SK-N-SH (cell line): ENCODE measurements at regions of chr16 and their contacts with region 1.

Region 1: DNA sequence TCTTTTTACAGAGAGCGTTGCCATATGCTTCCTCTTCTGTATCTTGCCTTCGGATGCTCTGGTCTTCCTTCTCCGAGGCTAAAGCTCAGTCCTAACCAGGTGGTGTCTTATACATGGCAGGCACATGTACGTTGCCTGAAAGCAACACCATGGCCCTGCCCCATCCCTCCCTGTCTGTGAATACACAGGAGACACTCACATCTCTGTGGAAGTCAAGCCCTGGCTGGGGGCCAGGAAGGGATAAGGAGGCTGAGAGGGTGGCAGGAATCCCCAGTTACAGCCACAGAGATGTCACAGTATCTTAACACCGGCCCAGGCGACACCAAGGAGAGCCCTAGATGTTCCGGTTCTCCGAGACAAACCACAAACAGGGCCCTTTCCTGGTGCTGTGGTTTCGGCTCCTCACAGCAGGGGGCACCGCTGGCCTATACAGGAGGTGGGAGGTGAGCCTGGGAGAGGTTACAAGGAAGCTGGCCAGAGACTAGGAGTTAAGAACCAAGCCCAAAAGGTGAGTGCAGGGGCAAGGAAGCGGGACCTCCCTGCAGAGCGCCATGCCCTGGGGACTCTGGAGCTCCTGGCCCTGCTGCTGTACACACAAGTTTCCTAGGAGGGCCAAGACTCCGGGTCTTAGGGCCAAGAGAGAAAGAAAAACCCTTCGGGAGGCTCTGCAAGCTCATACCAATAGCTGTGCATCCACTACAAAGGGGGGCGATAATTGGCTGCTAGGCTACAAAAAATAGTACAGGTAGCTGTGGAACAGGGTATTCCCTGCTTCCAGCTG is 41.7 kb downstream of the SRL start:
- DNase-seq: peak; percentile 86
- H3K4me3 ChIP-seq: no peak overlapping the region
- H3K27ac ChIP-seq: no peak overlapping the region
- H3K4me1 ChIP-seq: peaks cover 2 to 4% of the 10 kb centered on the region in 2 experiments; a peak in 1 of 4 replicates
- H3K27me3 ChIP-seq: no peaks in the 10 kb centered on the region
- CTCF ChIP-seq: peak; percentile 82
- EP300 ChIP-seq: no peak
- RAD21 ChIP-seq: peak; percentile 90

Region 2: GRCh38 chr16:3983081-3983520 is 217.1 kb before region 1 on chr16:
- CTCF ChIA-PET with region 1: interaction called, 14 read pairs
- POLR2A ChIA-PET with region 1: no interaction called
- DNase-seq: peak; percentile 91
- H3K4me3 ChIP-seq: no peak overlapping the region; a peak in 1 of 4 replicates
- H3K27ac ChIP-seq: no peak overlapping the region
- H3K4me1 ChIP-seq: peaks cover 13% of the 10 kb centered on the region in 2 experiments; a peak in 3 of 4 replicates
- H3K27me3 ChIP-seq: no peaks in the 10 kb centered on the region
- CTCF ChIP-seq: peak; percentile 70
- EP300 ChIP-seq: no peak
- RAD21 ChIP-seq: peak; percentile 95

Region 3: DNA sequence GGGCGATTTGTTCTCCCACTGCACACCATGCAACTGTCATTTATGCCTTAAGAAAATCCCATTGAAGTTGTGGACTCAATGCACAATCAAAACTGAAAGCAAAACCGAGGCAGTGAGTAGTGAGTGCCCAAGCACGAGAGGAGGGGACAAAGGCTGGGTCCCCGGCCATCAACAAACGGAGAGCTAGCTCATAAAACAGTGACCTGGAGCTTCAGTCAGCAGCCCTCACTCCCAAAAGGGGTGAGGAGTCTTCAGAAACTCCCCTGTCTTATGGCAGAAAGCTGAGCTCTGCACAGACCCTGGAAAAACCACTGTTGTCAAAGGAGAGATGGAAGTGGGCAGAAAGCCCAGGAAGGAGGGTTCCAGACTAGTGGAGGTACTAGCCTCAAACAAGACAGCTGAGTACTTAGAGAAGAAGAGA is 180.8 kb before region 1 on chr16:
- CTCF ChIA-PET with region 1: no interaction called
- POLR2A ChIA-PET with region 1: no interaction called
- DNase-seq: no peak
- H3K4me3 ChIP-seq: peak overlapping the region in 1 of 2 experiments; percentile 20; a peak in 2 of 4 replicates
- H3K27ac ChIP-seq: no peak overlapping the region
- H3K4me1 ChIP-seq: no peaks in the 10 kb centered on the region
- H3K27me3 ChIP-seq: no peaks in the 10 kb centered on the region
- CTCF ChIP-seq: no peak
- EP300 ChIP-seq: no peak
- RAD21 ChIP-seq: no peak

Region 4: GRCh38 chr16:4232541-4233386 is 32.6 kb after region 1 on chr16:
- CTCF ChIA-PET with region 1: interaction called, 14 read pairs
- POLR2A ChIA-PET with region 1: no interaction called
- DNase-seq: no peak
- H3K4me3 ChIP-seq: no peak overlapping the region
- H3K27ac ChIP-seq: no peak overlapping the region
- H3K4me1 ChIP-seq: no peaks in the 10 kb centered on the region
- H3K27me3 ChIP-seq: no peaks in the 10 kb centered on the region
- CTCF ChIP-seq: no peak
- EP300 ChIP-seq: no peak
- RAD21 ChIP-seq: no peak

Region 5: GRCh38 chr16:4271176-4272066 is 71.2 kb after region 1 on chr16:
- CTCF ChIA-PET with region 1: interaction called, 17 read pairs
- POLR2A ChIA-PET with region 1: no interaction called
- DNase-seq: peak; percentile 90
- H3K4me3 ChIP-seq: peak overlapping the region; percentile 65 to 84
- H3K27ac ChIP-seq: peak overlapping the region; percentile 79 to 91
- H3K4me1 ChIP-seq: peaks cover 0 to 12% of the 10 kb centered on the region in 2 experiments; a peak in 1 of 4 replicates
- H3K27me3 ChIP-seq: no peaks in the 10 kb centered on the region
- CTCF ChIP-seq: no peak
- EP300 ChIP-seq: no peak
- RAD21 ChIP-seq: no peak

Region 6: DNA sequence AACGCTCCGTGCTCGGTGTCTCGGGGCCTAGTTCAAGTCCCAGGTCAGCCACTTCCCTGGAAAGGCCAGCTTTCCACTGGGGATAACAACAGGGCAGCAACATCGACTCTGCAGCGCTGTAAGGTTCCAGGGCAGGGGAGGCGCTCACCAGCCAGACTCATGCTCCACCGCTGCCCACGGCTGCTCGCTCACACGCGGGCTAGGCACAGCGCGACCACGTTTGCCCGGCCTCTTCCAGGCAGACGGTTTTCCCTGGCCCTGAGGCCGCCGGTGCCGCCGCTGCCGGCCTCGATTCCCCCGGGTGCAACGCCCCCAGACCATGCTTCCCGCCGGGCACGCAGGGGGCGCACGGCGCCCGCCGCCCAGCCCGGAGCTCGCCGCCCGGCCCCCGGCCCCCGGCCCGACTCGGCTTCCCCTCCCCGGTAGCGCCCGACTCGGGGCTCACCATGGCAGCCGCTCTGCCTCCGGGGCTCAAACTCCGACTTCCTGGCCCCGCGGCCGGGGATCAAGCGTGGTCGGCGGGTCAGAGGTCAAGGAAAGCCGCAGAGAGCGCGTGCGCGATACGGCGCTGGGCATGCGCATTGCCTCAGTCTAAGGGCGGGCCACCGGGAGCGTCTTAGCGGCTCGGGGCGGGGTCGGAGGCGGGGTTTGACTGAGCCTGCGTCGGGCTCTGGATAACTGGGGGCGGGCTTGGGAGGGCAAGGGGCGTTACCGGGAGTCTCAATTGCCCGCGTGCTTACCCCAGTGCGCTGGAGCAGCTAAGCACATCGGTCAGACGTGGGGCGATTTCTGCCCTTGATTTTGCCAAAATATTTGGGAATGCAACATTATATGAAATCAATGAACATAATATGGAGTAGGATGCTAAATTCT is 150.8 kb after region 1 on chr16 and contains the start of gene PAM16:
- CTCF ChIA-PET with region 1: interaction called, 11 read pairs
- POLR2A ChIA-PET with region 1: no interaction called
- DNase-seq: peak; percentile 99
- H3K4me3 ChIP-seq: peak within 1 kb of the TSS; percentile 67 to 85
- H3K27ac ChIP-seq: peak within 1 kb of the TSS; percentile 59 to 83
- H3K4me1 ChIP-seq: peaks cover 3 to 10% of the 10 kb centered on the region in 2 experiments; a peak in 3 of 4 replicates
- H3K27me3 ChIP-seq: no peaks in the 10 kb centered on the region
- CTCF ChIP-seq: 0 out of 2 replicates have a peak, but pooled peaks have one; percentile 20
- EP300 ChIP-seq: no peak
- RAD21 ChIP-seq: no peak
- polyA plus RNA-seq, gene PAM16: 96.3 and 96.4 TPM in 2 replicates